ENCODE measurements at regions of chr11 and their contacts with region 1.

Region 1: GRCh38 chr11:35822815-35823495 is 120.9 kb upstream of the LDLRAD3 start:
- DNase-seq: no peak
- ATAC-seq: no peak
- H3K4me3 Mint-ChIP-seq: no peak overlapping the region
- H3K27ac Mint-ChIP-seq: no peak overlapping the region
- H3K4me1 Mint-ChIP-seq: peaks cover 15% of the 10 kb centered on the region
- H3K27me3 Mint-ChIP-seq: peaks cover 8% of the 10 kb centered on the region; the same call in 1 of the 2 replicates
- CTCF ChIP-seq: no peak

Region 2: GRCh38 chr11:35470616-35471015 is 352.3 kb before region 1 on chr11:
- CTCF ChIA-PET with region 1: no interaction called
- POLR2A ChIA-PET with region 1: no interaction called
- DNase-seq: no peak
- ATAC-seq: no peak
- H3K4me3 Mint-ChIP-seq: no peak overlapping the region
- H3K27ac Mint-ChIP-seq: no peak overlapping the region
- H3K4me1 Mint-ChIP-seq: 0 out of 2 replicates have a peak, but pooled peaks cover 3% of the 10 kb centered on the region
- H3K27me3 Mint-ChIP-seq: 0 out of 2 replicates have a peak, but pooled peaks cover 4% of the 10 kb centered on the region
- CTCF ChIP-seq: no peak

Region 3: GRCh38 chr11:35617687-35618496 is 205.1 kb before region 1 on chr11 and contains the start of gene FJX1:
- CTCF ChIA-PET with region 1: interaction called, 55 read pairs
- POLR2A ChIA-PET with region 1: no interaction called
- DNase-seq: peak; percentile 76
- ATAC-seq: peak; percentile 54
- H3K4me3 Mint-ChIP-seq: peak within 1 kb of the TSS; percentile 76
- H3K27ac Mint-ChIP-seq: peak within 1 kb of the TSS; percentile 60; the same call in 1 of the 2 replicates
- H3K4me1 Mint-ChIP-seq: peaks cover 47% of the 10 kb centered on the region
- H3K27me3 Mint-ChIP-seq: peaks cover 44% of the 10 kb centered on the region
- CTCF ChIP-seq: no peak
- total RNA-seq, gene FJX1: 8.3 to 12.0 TPM (median 11.0 TPM) in 3 replicates

Region 4: DNA sequence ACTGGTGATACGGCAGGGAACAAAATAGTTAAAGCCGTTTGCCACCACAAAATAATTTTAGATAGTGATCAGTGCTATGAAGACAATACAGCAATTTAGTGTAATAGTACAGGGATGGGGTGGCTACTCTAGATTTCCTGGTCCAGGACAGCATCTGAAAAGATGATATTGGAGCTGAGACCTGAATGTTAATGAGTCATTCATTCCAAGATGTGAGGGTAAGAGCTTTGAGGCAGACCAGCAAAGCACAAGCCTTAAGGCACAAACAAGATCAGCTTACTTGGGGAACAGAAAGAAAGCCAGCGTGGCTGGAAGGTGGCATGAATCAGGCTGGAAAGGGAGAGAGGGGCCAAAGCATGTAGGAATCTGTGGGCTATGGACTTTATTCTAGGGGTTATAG is 28.1 kb before region 1 on chr11:
- CTCF ChIA-PET with region 1: interaction called, 59 read pairs
- POLR2A ChIA-PET with region 1: interaction called, 3 read pairs
- DNase-seq: no peak
- ATAC-seq: no peak
- H3K4me3 Mint-ChIP-seq: no peak overlapping the region
- H3K27ac Mint-ChIP-seq: no peak overlapping the region
- H3K4me1 Mint-ChIP-seq: no peaks in the 10 kb centered on the region; the same call in none of the 2 replicates
- H3K27me3 Mint-ChIP-seq: no peaks in the 10 kb centered on the region
- CTCF ChIP-seq: no peak

Region 5: DNA sequence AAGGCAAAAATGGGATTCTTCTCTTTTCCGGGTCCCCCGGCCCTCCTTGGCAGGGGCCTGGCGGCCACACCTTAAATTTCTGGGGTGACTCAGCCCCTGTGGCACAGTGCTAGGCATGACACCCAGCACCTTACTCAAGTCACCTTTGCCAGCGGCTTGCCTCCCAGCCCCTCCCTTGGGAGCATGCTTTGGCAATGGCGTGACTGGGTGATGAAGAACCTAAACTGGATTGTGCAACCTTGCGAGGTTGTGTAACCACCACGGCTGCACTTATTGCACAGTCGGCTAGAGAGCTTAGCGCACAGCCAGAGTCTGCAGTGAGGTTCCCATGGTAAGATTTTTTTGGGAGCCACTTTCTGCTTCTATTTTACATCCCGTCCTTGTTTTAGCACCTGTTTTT is 104.8 kb after region 1 on chr11:
- CTCF ChIA-PET with region 1: interaction called, 10 read pairs
- POLR2A ChIA-PET with region 1: no interaction called
- DNase-seq: no peak
- ATAC-seq: no peak
- H3K4me3 Mint-ChIP-seq: no peak overlapping the region
- H3K27ac Mint-ChIP-seq: no peak overlapping the region
- H3K4me1 Mint-ChIP-seq: 0 out of 2 replicates have a peak, but pooled peaks cover 2% of the 10 kb centered on the region
- H3K27me3 Mint-ChIP-seq: peaks cover 2% of the 10 kb centered on the region; the same call in 1 of the 2 replicates
- CTCF ChIP-seq: no peak

Region 6: DNA sequence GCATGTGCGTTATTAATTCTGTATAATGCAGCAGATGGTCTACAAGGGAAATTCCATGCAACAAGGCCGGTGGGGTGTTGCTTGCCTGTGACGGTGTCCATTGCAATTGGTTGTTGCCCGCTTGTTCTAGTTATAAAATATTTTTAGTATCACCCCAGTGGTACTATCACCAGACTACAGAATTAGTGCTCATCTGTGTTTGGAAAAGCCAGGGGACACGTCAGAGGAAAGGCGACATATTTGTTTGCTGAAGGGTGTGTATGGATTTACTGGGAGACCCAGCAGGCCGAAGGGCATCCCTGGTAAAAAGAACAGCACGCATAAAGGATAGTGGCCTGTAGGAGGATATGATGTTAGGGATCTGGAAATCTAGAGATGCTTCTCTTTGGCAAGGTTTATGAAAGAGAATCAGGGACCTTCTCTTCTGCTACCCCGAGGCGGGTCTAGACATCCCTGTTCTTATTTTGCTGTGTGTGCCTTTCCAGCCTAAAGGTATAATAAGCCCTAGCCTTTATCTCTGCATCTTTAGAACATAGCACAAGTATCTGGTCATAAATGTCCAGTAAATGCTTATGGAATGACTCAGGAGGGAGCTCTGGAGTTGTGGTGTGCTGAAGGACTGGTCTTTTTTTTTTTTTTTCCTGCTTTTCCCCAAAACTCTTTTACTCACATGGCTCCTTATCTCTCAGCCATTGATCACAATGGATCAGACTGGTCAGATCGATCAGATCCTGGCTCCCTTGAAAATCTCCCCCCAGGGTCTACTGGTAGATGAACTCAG is 211.8 kb after region 1 on chr11:
- CTCF ChIA-PET with region 1: interaction called, 18 read pairs
- POLR2A ChIA-PET with region 1: no interaction called
- DNase-seq: no peak
- ATAC-seq: no peak
- H3K4me3 Mint-ChIP-seq: no peak overlapping the region
- H3K27ac Mint-ChIP-seq: no peak overlapping the region
- H3K4me1 Mint-ChIP-seq: peaks cover 28% of the 10 kb centered on the region
- H3K27me3 Mint-ChIP-seq: no peaks in the 10 kb centered on the region
- CTCF ChIP-seq: no peak

Region 7: DNA sequence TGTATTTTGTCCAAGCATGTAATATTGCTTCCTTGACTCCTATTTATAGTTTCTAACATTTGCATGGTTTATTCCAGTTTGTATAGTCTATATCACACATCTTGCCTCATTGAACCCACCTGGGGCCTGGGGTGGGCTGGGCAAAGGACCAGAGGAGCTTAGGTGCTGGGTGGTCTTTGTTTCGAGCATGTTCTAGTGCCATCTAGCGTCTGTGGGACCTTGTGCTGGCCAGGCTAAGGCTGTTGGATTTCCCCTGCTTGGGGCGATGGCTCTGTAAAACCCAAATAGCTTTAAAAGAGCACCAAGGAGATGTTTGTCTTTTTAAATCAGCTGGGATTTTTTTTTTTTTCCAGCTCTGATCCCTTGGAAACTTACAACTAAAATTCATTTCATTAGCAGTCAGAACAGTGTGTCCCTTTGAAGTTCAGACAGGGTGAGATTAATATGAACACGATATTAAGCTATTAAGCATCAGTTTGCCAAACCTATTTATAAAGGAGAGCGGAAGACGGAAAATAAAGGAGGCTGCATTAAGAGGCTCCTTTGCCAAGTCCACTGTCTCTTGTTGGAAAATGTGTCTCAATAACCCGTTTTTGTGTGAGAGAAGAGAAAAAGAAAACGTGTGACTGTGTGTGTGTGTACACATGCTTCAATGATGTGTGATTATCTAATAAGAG is 308.9 kb after region 1 on chr11:
- CTCF ChIA-PET with region 1: interaction called, 131 read pairs
- POLR2A ChIA-PET with region 1: interaction called, 5 read pairs
- DNase-seq: peak; percentile 67
- ATAC-seq: peak; percentile 96
- H3K4me3 Mint-ChIP-seq: no peak overlapping the region
- H3K27ac Mint-ChIP-seq: 0 out of 2 replicates have a peak overlapping the region, but pooled peaks have one; percentile 23
- H3K4me1 Mint-ChIP-seq: peaks cover 49% of the 10 kb centered on the region
- H3K27me3 Mint-ChIP-seq: no peaks in the 10 kb centered on the region
- CTCF ChIP-seq: peak; percentile 35; the same call in 1 of the 2 replicates

Region 8: DNA sequence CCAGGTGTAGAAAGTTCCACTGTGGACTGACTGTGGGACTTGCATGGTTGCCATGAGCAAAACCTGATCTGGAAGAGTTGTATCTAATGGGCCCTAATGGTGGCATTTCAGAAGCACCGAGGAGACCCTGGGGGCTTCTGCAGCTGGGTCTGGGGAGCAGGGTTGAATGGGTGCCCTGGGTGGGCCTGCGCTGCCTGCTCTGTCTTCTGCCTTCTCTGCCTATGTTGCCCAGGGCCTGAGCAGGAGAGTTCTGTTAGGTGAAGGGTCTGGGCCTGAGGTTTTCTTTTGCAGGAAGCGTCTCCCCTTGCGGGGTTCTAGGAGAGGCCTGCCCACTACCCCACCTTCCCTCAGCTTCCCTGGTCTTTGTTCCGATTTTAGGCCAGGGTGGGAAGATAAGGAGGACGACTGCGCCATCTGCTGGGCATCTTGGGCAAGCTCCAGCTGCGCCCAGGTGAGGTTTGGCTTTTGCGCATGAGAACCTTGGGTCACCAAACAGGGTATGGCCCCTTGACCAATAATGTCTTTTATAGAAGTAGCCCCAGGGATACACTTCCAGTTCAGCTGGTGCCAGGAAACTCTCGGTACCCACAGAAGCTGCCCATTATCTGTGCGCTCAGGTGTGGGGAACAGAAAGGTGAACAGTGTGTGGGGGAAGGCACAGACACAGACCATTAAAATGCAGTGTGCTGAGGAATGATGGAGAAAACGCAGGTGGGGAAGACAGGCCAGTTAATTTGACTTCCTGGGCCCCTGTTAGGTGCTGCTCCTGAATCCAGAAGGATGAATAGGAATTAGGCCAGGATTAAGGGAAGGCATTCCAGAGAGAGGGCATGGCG is 443.1 kb after region 1 on chr11:
- CTCF ChIA-PET with region 1: interaction called, 110 read pairs
- POLR2A ChIA-PET with region 1: no interaction called
- DNase-seq: peak; percentile 80
- ATAC-seq: peak; percentile 93
- H3K4me3 Mint-ChIP-seq: no peak overlapping the region
- H3K27ac Mint-ChIP-seq: no peak overlapping the region
- H3K4me1 Mint-ChIP-seq: peaks cover 2% of the 10 kb centered on the region
- H3K27me3 Mint-ChIP-seq: peaks cover 2% of the 10 kb centered on the region
- CTCF ChIP-seq: peak; percentile 82